Activated CD4-positive, alpha-beta memory T cell treated with anti-CD3 and anti-CD28 coated beads, Interleukin-2, amount 10 ng/mL, durations not matched to agents 7 days and 5 days (primary cell): ENCODE measurements at regions of chr17 and their contacts with region 1.

Region 1: DNA sequence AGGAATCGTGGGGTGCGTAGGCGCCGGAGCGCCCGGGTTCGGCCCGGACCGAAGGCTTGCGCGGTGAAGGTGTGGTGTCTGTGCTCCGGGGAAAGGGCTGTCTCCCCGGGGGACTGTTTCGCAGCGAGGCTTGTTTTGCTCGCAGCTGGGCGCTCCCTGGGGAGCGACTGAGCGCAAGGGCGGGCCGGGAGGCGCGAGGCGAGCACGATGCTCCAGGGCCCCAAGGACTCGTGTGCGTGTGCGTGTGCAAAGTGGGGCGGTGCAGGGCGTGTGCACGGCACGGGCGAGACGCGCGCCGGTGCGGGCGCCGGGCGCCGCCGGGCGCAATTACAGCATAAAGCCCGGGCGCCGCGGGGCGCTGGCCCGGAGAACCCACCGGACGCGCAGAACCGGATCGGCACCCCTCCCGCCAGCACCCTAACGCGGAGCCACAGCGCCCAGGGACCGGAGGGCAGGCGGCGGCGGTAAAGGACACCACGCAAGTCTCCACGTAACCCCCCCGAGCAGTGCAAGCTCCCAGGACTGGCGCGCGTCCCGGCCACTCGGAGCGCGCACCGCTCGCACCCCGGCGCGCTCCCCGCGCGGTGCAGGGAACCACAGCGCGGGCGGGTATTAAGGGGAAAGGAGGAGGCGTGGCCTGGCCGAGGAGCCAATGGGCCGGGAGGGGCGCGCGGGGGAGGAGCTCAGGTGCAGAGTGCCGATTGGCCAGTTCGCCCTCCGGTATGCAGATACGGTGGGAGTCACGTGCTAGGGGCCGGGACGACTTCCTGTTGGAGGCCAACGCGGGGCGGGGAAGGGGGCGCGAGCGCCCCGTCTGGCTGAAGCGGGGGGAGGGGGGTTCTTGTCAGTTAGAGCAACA is at the start of gene TNRC6C:
- DNase-seq: peak; percentile 100
- H3K4me3 Mint-ChIP-seq: peak within 1 kb of the TSS; percentile 83
- H3K27ac Mint-ChIP-seq: peak within 1 kb of the TSS; percentile 61
- H3K4me1 Mint-ChIP-seq: peaks cover 31% of the 10 kb centered on the region
- H3K27me3 Mint-ChIP-seq: peaks cover 46% of the 10 kb centered on the region
- total RNA-seq, gene TNRC6C: 25.5 to 26.7 TPM

Region 2: GRCh38 chr17:77666881-77667395 is 291.1 kb before region 1 on chr17:
- CTCF ChIA-PET with region 1: interaction called, 3 read pairs
- POLR2A ChIA-PET with region 1: interaction called, 12 read pairs
- DNase-seq: peak; percentile 90
- H3K4me3 Mint-ChIP-seq: peak overlapping the region; percentile 85
- H3K27ac Mint-ChIP-seq: peak overlapping the region; percentile 97
- H3K4me1 Mint-ChIP-seq: peaks cover 46% of the 10 kb centered on the region
- H3K27me3 Mint-ChIP-seq: no peaks in the 10 kb centered on the region

Region 3: DNA sequence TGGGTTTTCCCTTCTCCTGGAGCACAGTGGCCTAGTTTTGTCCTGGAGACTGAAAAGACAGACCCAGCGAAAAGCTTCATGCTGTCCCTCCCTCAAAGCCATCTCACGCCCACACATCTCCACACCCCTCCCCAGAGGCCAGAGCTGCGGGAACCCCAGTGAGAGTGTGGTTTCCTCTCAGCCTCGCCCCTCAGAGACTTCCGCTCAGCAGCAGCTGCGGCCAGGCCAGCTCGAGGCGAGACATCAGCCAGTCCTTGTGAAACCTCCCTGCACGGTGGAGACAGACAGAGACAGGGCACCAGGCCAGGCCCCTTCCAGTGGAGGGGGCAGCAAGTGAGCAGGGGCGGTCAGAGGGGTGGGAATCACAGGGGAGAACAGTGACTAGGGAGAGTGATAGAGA is 76.5 kb before region 1 on chr17:
- CTCF ChIA-PET with region 1: interaction called, 4 read pairs
- POLR2A ChIA-PET with region 1: interaction called, 47 read pairs
- DNase-seq: peak; percentile 89
- H3K4me3 Mint-ChIP-seq: peak overlapping the region; percentile 70
- H3K27ac Mint-ChIP-seq: peak overlapping the region; percentile 88
- H3K4me1 Mint-ChIP-seq: peaks cover 50% of the 10 kb centered on the region
- H3K27me3 Mint-ChIP-seq: peaks cover 9% of the 10 kb centered on the region

Region 4: GRCh38 chr17:77968788-77969187 is 10.7 kb after region 1 on chr17:
- CTCF ChIA-PET with region 1: interaction called, 3 read pairs
- POLR2A ChIA-PET with region 1: interaction called, 23 read pairs
- DNase-seq: no peak
- H3K4me3 Mint-ChIP-seq: no peak overlapping the region
- H3K27ac Mint-ChIP-seq: no peak overlapping the region
- H3K4me1 Mint-ChIP-seq: peaks cover 1% of the 10 kb centered on the region
- H3K27me3 Mint-ChIP-seq: peaks cover under 1% of the 10 kb centered on the region

Region 5: DNA sequence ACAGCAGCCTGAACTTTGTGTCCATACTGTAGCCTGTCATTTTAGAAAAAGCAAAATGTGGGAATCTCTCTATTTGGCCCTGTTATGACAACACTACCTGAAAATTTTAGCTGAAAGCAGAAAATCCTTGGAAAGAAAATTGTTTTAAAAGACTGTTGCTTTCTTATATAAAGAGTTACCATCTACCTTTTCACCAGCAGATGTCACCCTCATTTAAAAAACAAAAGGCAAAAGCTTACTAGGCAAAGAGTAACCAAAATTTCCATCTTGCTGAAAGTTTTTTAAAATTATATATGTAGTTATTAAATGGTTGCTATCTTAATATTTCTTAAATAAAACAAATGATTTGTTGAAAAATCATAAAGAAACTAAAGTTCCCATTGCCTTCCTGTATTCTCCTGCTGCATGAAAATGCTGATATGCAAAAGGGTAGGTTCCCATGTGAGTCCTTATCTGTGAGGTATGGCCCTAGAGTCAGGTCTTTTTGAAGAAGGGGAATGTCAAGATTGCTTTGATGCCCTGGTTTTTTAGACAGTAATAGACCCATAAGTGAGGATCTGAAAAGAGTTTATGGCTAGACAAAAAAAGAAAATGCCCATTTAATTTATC is 61.4 kb after region 1 on chr17:
- CTCF ChIA-PET with region 1: interaction called, 4 read pairs
- POLR2A ChIA-PET with region 1: interaction called, 26 read pairs
- DNase-seq: no peak
- H3K4me3 Mint-ChIP-seq: peak overlapping the region; percentile 57
- H3K27ac Mint-ChIP-seq: peak overlapping the region; percentile 83
- H3K4me1 Mint-ChIP-seq: peaks cover 26% of the 10 kb centered on the region
- H3K27me3 Mint-ChIP-seq: no peaks in the 10 kb centered on the region

Region 6: GRCh38 chr17:78159575-78160158 is 201.6 kb after region 1 on chr17:
- CTCF ChIA-PET with region 1: no interaction called
- POLR2A ChIA-PET with region 1: no interaction called
- DNase-seq: no peak
- H3K4me3 Mint-ChIP-seq: no peak overlapping the region
- H3K27ac Mint-ChIP-seq: peak overlapping the region; percentile 28
- H3K4me1 Mint-ChIP-seq: peaks cover 14% of the 10 kb centered on the region
- H3K27me3 Mint-ChIP-seq: no peaks in the 10 kb centered on the region